ENCODE measurements at regions of chr12 and their contacts with region 1.

Region 1: GRCh38 chr12:124411281-124411878 is 116.5 kb downstream of the RFLNA start:
- DNase-seq: peak; percentile 66 to 82
- ATAC-seq: peak; percentile 70 to 81
- H3K4me3 ChIP-seq: no peak overlapping the region
- H3K27ac ChIP-seq: peak overlapping the region; percentile 80 to 87 (median 85)
- H3K4me1 ChIP-seq: peaks cover 24 to 54% of the 10 kb centered on the region in 2 donors
- H3K27me3 ChIP-seq: no peaks in the 10 kb centered on the region
- CTCF ChIP-seq: no peak
- POLR2A ChIP-seq: no peak

Region 2: DNA sequence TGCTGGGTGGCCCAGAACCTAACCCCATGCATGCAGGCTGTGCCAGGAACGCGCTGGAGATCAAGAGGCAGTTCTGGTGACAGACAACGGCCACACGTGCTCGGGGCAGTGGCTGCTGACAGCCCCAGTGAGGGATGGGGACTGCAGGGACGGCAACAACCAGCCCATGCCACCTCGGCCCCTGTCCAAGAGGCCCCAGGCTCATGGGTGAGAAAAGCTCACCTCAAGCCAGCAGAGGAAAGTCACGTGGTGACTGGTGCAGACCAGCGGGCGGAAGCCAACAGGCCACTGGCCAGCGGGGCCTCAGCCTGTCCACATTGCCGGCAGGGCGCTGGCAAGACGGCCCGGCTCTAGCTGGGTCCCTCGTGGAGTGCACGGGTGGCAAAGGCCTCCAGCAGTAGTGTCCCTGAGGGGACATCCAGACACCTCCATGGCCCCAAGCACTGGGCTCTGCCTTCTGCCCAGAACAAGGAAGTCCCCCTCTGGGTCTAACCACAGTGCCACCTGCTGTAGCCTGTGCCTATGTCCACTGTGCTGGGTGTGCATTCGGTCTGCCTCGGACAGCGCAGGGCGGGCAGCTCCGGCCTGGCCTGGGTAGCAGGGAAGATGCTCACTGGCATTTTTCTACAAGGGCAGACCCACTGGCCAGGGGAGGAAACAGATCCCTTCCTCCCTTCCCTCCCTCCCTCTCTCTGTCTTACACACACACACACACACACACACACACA is 21.9 kb after region 1 on chr12:
- in situ Hi-C with region 1: no loop called
- intact Hi-C with region 1: loop called (anchors 2 kb)
- DNase-seq: peak; percentile 95 to 97
- ATAC-seq: peak; percentile 80 to 82
- H3K4me3 ChIP-seq: no peak overlapping the region
- H3K27ac ChIP-seq: peak overlapping the region; percentile 81 to 87 (median 85)
- H3K4me1 ChIP-seq: peaks cover 24 to 25% of the 10 kb centered on the region in 2 donors
- H3K27me3 ChIP-seq: no peaks in the 10 kb centered on the region
- CTCF ChIP-seq: peak in 4 of 5 experiments; percentile 15 to 41 (median 39)
- POLR2A ChIP-seq: peak; percentile 25 to 39